HEK293 (cell line): ENCODE measurements at regions of chr18 and their contacts with region 1.

Region 1: GRCh38 chr18:75489493-75490190 is 62.1 kb upstream of the SMIM21 start:
- H3K4me3 ChIP-seq: no peak overlapping the region
- H3K27ac ChIP-seq: no peak overlapping the region
- H3K4me1 ChIP-seq: no peaks in the 10 kb centered on the region
- CTCF ChIP-seq: no peak

Region 2: GRCh38 chr18:75478996-75479880 is 10.4 kb before region 1 on chr18:
- CTCF ChIA-PET with region 1: interaction called, 11 read pairs
- POLR2A ChIA-PET with region 1: no interaction called
- H3K4me3 ChIP-seq: no peak overlapping the region
- H3K27ac ChIP-seq: no peak overlapping the region
- H3K4me1 ChIP-seq: no peaks in the 10 kb centered on the region
- CTCF ChIP-seq: no peak

Region 3: GRCh38 chr18:75500545-75500944 is 10.9 kb after region 1 on chr18:
- CTCF ChIA-PET with region 1: no interaction called
- POLR2A ChIA-PET with region 1: no interaction called
- H3K4me3 ChIP-seq: no peak overlapping the region
- H3K27ac ChIP-seq: no peak overlapping the region
- H3K4me1 ChIP-seq: no peaks in the 10 kb centered on the region
- CTCF ChIP-seq: no peak

Region 4: DNA sequence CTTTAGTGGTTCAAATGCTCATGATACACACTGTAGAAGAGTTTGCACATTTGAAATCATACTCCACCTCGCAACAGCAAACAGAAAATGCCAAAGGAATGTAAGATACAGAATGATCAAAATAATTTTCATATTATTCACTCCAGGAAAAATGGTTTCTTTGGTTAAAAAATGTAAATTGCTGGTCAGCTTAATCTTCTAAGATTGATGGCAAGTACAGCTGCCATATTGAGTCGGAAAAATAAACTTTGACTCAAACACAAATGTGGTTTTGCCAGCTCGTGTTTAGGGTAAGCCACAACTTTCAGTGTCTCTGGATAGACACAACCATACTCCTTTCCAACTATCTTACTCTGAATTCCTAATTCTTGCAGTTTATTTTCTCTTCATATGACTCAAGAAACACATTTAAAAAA is 92.8 kb after region 1 on chr18:
- CTCF ChIA-PET with region 1: no interaction called
- POLR2A ChIA-PET with region 1: no interaction called
- H3K4me3 ChIP-seq: no peak overlapping the region
- H3K27ac ChIP-seq: no peak overlapping the region
- H3K4me1 ChIP-seq: no peaks in the 10 kb centered on the region
- CTCF ChIP-seq: no peak